ENCODE measurements at regions of chr3 and their contacts with region 1.

Region 1: DNA sequence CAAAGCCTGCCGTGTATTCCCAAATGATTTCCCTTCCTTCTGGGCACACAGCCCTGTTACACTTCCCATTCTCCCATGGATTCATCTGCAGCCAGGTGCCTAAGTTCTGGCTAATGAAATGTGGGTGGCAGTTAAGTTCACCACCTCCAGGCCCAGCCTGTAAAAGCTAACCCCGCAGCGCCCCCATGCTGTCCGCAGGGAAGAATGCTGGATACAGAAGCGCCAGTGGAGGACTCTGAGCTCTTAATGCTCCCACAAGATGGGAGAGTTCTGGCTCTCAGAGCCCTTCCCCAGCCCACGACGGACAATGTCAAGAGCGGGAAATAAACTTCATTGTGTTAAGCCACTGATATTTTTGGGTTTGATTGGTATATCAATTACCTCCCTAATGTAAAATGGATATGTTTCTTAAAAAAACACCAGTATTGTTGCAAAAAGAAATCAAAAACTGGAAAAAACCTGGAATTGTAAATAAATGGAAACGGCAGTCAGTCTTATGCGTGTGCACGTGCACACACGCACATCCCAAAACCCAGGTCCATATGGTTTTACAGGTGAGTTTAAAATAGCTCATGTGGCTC is 37.7 kb upstream of the FGD5 start:
- DNase-seq: peak in 2 of 3 donors; percentile 6 to 43
- H3K4me3 ChIP-seq: no peak overlapping the region
- H3K4me3 Mint-ChIP-seq: no peak overlapping the region
- H3K27ac ChIP-seq: no peak overlapping the region
- H3K27ac Mint-ChIP-seq: no peak overlapping the region
- H3K4me1 ChIP-seq: no peaks in the 10 kb centered on the region
- H3K4me1 Mint-ChIP-seq: no peaks in the 10 kb centered on the region
- H3K27me3 ChIP-seq: no peaks in the 10 kb centered on the region
- H3K27me3 Mint-ChIP-seq: peaks cover 0 to 4% (median 4%) of the 10 kb centered on the region in 3 donors
- CTCF ChIP-seq: peak; percentile 55

Region 2: DNA sequence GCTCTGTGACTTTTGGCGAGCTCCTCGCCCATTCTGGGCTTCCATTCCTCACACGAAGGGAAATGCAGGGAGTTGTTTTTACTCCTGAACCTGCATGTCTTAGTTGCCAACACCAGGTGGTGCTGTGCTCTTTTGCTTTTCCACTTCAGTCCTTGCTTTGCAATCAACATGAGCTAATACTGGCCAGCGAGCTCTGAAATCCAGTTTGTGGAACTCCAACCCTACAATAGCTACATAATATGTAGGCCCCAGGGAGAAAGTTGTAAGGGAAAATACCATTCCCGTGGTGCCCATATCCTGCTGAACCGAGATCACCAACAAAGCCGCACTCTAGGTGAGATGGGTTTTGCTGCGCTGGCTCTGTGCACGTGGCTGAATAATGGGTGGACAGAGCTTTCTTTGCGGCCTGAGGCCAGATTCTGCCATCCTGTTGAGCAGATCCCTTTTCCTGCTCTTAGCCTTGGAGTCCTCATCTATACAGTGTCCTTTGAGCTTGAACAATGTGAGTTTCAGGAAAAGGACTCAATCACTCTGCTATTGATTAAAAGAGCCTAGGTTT is 577.4 kb before region 1 on chr3:
- intact Hi-C with region 1: loop called in 1 of 2 experiments (anchors 5 kb)
- DNase-seq: peak; percentile 34 to 61 (median 44)
- H3K4me3 ChIP-seq: no peak overlapping the region
- H3K4me3 Mint-ChIP-seq: no peak overlapping the region
- H3K27ac ChIP-seq: no peak overlapping the region
- H3K27ac Mint-ChIP-seq: no peak overlapping the region
- H3K4me1 ChIP-seq: peaks cover 9 to 11% of the 10 kb centered on the region in 2 donors
- H3K4me1 Mint-ChIP-seq: peaks cover 13% of the 10 kb centered on the region
- H3K27me3 ChIP-seq: no peaks in the 10 kb centered on the region
- H3K27me3 Mint-ChIP-seq: peaks cover 0 to 2% (median 0%) of the 10 kb centered on the region in 3 donors
- CTCF ChIP-seq: peak; percentile 80

Region 3: DNA sequence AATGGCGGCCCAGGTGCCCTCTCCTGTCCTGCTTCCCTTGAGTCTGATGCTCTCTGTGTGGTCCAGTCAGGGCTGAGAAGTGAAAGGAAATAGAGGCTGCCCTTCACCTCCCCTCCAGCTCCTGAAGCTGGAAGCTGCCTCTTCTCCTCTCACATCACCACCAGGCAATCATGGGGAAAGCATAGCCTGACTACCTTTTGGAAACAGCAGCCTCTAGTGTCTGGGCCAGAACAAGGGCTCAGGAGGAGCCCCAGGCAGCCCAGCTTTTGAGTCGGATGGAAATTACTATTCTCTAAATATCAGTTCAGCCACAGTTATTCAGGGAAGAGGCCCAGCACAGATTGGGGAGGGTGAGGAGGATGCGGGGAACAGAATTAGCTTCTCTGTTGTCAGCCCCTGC is 172.7 kb before region 1 on chr3:
- intact Hi-C with region 1: no loop called
- DNase-seq: no peak
- H3K4me3 ChIP-seq: no peak overlapping the region
- H3K4me3 Mint-ChIP-seq: no peak overlapping the region
- H3K27ac ChIP-seq: no peak overlapping the region
- H3K27ac Mint-ChIP-seq: no peak overlapping the region
- H3K4me1 ChIP-seq: no peaks in the 10 kb centered on the region
- H3K4me1 Mint-ChIP-seq: peaks cover 4% of the 10 kb centered on the region
- H3K27me3 ChIP-seq: peaks cover 21 to 37% of the 10 kb centered on the region in 2 donors
- H3K27me3 Mint-ChIP-seq: peaks cover 23 to 54% (median 31%) of the 10 kb centered on the region in 3 donors
- CTCF ChIP-seq: no peak

Region 4: DNA sequence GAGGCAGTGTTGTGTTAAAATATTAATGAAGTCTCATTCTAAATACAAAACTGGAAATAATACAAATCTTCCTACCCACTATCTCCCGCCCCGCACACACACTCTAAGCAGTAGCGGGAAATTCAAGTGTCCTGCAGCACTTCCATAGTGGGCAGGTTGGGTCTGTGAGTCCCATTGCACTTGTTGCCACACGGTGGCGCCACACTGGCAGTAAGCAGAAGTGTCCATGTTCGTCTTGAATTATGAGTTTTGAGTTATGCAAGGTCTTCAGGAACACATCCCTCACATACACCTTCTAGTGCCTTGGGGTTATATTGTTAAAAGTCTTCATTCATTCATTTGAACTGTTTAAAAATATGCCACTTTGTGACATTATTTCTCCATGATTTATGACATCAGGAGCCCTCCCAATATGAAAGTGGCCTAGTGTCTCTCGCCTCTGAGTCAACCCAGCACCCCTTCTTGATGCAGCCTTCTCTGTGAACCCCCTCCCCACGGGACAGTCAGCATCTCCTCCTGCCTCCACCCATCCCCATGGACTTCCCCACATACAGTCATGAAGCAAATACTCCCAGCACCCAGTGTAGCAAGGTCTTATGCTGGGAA is 147.1 kb before region 1 on chr3:
- intact Hi-C with region 1: loop called in 1 of 2 experiments (anchors 2 kb)
- DNase-seq: peak; percentile 60 to 75 (median 63)
- H3K4me3 ChIP-seq: no peak overlapping the region
- H3K4me3 Mint-ChIP-seq: no peak overlapping the region
- H3K27ac ChIP-seq: no peak overlapping the region
- H3K27ac Mint-ChIP-seq: no peak overlapping the region
- H3K4me1 ChIP-seq: no peaks in the 10 kb centered on the region
- H3K4me1 Mint-ChIP-seq: peaks cover 3% of the 10 kb centered on the region
- H3K27me3 ChIP-seq: peaks cover 0 to 2% of the 10 kb centered on the region in 2 donors
- H3K27me3 Mint-ChIP-seq: peaks cover 0 to 14% (median 3%) of the 10 kb centered on the region in 3 donors
- CTCF ChIP-seq: peak; percentile 84

Measured in CD14-positive monocyte (primary cell).